ENCODE measurements at regions of chr11 and their contacts with region 1.

Region 1: DNA sequence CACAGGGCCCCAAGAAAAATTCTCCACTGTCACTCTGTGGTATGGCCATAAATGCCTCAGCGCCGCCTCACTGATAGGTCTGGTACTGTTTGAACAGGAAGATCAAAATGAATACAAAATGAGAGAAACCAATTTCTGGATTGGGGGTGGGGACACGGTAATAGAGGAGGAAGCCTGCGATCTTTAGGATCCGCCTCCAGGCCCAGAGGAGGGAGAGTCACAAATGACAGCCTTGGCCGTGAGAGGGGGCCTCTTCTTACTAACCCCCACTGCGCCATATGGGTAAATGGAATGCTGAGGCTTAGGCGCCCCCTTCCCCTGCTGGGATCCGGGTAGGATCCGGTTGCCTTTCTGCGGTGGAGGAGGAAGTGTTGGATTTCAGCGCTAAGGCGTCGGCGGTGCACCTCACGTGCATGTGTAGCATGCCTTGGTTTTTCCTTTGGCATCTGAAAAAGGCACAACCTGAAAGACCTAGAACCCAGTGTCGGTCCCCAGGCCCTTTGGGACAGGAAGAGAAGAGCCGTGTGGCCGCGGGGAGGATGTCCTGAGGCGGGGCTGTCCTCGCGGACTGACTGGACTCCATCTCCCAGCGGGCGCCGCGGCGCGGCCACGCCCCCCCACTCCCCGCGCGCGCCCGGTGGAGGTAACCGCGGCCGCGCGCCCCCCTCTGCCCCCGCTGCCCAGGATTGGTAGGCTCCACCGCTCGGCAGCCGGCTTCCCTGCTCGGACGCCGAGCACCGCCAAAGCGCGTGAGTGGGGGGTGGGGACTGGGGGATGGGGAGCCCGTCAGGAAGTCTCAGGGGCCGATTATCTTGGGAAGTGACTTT is 718 bp upstream of the MADD start:
- DNase-seq: peak; percentile 97
- H3K4me3 ChIP-seq: peak overlapping the region; percentile 77 to 94 (median 92)
- H3K27ac ChIP-seq: peak overlapping the region; percentile 95 to 98 (median 96)
- H3K4me1 ChIP-seq: peaks cover 0 to 40% (median 38%) of the 10 kb centered on the region in 4 donors
- H3K27me3 ChIP-seq: no peaks in the 10 kb centered on the region
- CTCF ChIP-seq: peak in 1 of 4 experiments; percentile 12
- EP300 ChIP-seq: no peak
- POLR2A ChIP-seq: peak in 1 of 2 donors; percentile 41

Region 2: DNA sequence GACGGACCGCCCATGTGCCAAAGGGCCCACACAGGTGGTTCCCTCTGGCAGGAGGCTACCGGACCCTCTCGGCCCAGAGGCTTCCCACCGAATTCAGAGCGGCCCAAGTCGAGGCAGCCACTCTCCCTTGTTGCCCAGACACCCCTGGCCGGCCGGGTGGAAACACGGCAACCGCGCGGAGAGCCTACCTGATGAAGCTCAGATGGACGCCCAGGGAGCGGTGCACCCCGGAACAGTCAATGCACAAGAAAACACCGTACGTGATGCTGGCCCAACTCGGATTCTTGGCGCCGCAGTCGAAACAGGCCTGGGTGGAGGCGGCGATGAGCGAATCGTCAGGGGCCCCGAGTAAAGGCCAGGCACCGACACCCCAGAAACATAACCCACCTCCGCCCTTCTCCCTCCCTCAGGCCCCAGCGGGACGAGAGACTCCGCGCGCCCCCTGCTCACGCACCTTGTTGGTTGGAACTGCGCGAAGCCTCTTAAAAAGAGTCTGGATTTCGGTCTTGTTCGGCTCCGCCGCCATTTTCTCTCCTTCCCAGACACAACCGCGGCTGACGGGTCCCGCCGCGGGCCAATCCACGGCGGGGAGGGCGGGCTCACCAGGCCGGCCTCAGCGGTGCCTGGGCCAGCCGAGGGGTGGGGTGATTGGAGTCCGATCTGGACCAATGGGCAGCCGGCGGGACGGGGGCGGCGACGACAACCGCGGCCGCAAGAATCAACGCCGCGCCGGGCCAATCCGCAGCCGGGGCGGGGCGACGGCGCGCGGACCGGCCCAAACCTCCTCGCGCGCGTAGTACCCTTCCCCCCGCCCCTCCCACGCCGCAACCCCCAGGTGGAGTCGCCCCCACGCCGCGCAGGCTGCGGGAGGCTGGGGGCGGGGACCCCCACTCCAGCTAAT is 92.6 kb before region 1 on chr11 and contains the start of gene ARFGAP2:
- intact Hi-C with region 1: loop called (anchors 2 kb)
- DNase-seq: peak; percentile 98
- H3K4me3 ChIP-seq: peak within 1 kb of the TSS; percentile 77 to 97 (median 94)
- H3K27ac ChIP-seq: peak within 1 kb of the TSS; percentile 92 to 99 (median 98)
- H3K4me1 ChIP-seq: peaks cover 0 to 66% (median 50%) of the 10 kb centered on the region in 4 donors
- H3K27me3 ChIP-seq: no peaks in the 10 kb centered on the region
- CTCF ChIP-seq: no peak
- EP300 ChIP-seq: peak in 2 of 4 donors; percentile 17 to 24
- POLR2A ChIP-seq: peak; percentile 16 to 32
- total RNA-seq, gene ARFGAP2: 85.0 to 185 (median 123) TPM